ENCODE measurements at regions of chr1 and their contacts with region 1.

Region 1: DNA sequence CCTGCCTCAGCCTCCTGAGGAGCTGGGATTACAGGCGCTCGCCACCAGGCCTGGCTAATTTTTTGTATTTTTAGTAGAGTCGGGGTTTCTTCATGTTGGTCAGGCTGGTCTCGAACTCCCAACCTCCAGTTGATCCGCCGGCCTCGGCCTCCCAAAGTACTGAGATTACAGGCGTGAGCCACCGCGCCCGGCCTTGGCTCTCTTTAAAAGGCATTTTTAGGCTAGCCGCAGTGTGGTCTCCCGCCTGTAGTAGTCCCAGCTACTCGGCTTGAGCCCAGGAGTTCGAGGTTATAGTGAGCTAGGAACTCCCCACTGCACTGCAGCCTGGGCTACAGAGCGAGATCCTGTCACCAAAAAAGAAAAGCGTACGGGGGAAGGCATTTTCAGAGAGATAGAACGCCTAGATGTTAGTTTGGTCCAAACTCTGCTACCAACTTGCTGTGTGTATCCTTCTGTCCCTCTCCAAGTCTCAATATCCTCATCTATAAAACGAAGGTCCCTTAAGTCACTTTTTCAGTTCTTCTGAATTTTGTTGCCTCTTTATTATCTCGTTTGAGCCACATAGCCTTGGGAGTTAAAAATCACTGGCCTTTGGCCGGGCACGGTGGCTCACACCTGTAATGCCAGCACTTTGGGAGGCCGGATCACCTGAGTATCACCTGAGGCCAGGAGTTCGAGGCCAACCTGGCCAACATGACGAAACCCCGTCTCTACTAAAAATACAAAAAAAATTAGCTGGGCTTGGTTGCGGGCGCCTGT is 734 bp downstream of the MED18 start:
- DNase-seq: no peak
- H3K4me3 Mint-ChIP-seq: peak overlapping the region; percentile 96
- H3K27ac Mint-ChIP-seq: peak overlapping the region; percentile 98
- H3K4me1 Mint-ChIP-seq: peaks cover 33% of the 10 kb centered on the region
- H3K27me3 Mint-ChIP-seq: peaks cover 2% of the 10 kb centered on the region

Region 2: DNA sequence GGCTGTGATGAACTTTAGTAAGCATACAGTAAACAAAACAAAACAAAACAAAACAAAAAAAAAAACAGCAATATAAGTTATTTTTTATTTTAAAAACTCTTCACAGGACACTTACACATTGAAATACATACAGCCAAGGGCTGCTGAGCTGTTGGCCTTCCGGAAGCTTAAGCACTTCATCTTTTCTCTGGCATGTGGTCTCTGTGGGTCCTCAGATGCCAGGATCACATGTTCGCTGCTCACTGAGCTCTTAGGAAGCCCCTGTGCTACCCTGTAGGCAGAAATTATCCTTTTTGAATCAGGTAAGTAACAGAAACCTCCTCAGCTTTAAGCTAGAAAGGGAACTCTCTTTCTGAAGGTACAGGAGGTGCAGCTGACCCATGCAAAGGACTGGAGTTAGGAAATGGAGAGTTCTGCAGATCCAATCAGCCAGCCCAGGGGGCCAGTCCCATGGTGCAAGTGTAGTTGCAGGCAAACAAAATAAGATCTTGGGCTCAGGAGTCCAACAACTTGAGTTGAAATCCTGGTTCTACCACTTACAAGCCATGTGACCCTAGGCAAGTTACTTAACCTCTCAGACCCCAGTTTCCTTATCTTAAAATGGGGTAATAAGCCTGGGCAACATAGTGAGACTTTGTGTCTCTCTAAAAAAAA is 23.1 kb before region 1 on chr1:
- intact Hi-C with region 1: no loop called
- DNase-seq: no peak
- H3K4me3 Mint-ChIP-seq: no peak overlapping the region
- H3K27ac Mint-ChIP-seq: no peak overlapping the region
- H3K4me1 Mint-ChIP-seq: no peaks in the 10 kb centered on the region
- H3K27me3 Mint-ChIP-seq: peaks cover 6% of the 10 kb centered on the region

Region 3: GRCh38 chr1:28369371-28370238 is 40.0 kb after region 1 on chr1 and contains the start of gene PHACTR4:
- intact Hi-C with region 1: loop called (anchors 2 kb)
- DNase-seq: peak; percentile 95
- H3K4me3 Mint-ChIP-seq: peak within 1 kb of the TSS; percentile 95
- H3K27ac Mint-ChIP-seq: peak within 1 kb of the TSS; percentile 95
- H3K4me1 Mint-ChIP-seq: peaks cover 32% of the 10 kb centered on the region
- H3K27me3 Mint-ChIP-seq: no peaks in the 10 kb centered on the region
- total RNA-seq, gene PHACTR4: 29.6 and 30.5 TPM in 2 replicates